Right cardiac atrium (tissue), 5 donors: ENCODE measurements at regions of chr20 and their contacts with region 1.

Region 1: DNA sequence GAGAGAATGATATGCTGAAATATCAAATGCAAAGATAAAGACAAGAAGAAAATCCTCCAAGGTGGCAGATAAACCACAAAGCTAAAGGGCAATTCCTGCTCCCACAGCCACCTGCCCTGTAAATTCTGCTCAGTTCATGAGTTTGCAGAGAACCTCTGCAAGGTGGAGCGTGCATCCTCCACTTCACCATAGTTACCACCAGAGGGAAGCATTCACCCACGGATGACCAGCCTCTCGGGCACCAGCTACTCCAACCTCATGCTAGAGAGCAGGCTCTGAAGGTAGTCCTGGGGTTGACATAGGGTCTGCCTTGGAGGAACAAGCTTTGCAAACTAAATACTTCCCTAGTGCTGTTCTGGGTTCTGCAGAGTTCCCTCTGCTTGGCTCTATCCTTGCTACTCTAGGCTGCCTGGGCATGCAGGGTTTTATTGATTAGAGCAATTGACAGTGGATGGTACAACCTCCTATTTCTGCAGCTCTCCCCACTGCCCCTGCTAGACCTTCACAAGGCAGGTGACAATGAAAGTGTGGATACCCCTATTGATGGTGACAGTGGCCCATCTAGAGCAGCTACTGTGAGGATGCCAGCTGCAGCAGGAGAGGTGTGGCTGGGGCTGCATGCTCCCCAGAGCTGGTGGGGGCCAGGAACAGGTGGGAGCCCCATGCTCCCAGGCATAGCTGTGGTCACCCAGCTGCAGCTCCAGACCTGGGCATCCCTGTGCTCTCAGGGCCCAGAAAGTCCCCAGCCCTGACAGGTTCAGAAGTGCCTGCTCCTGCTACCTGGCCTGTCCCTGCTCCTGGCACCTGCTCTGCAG is 51.1 kb downstream of the GGTLC1 start:
- DNase-seq: peak; percentile 38 to 73 (median 67)
- ATAC-seq: peak; percentile 93 to 96
- H3K4me3 ChIP-seq: no peak overlapping the region
- H3K27ac ChIP-seq: no peak overlapping the region
- H3K4me1 ChIP-seq: no peaks in the 10 kb centered on the region
- H3K27me3 ChIP-seq: no peaks in the 10 kb centered on the region

Region 2: GRCh38 chr20:22861229-22861980 is 1076.1 kb before region 1 on chr20:
- intact Hi-C with region 1: no loop called
- DNase-seq: no peak
- ATAC-seq: no peak
- H3K4me3 ChIP-seq: no peak overlapping the region
- H3K27ac ChIP-seq: peak overlapping the region; percentile 20
- H3K4me1 ChIP-seq: no peaks in the 10 kb centered on the region
- H3K27me3 ChIP-seq: no peaks in the 10 kb centered on the region

Region 3: DNA sequence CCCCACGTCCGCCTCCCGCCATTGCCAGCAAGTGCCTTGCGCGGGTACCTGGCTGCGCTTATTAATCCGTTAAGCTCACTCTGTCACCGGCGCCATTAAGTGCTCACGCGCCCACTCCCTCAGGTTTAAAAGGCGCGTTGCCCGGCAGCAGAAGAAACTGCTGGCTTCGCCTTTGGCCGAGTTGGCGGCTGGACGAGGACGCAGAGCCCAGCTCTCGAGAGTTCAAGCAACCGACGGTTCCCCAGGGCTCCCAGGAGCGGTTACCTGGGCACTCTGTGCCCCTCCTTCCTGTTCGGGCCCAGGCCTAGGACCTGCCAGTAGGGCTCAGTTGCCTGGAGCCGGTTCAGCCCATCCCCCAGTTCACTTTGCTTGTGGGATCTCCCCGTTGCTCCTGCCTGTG is 51.1 kb after region 1 on chr20 and contains the start of gene GGTLC1:
- intact Hi-C with region 1: loop called in 2 of 4 experiments (anchors 5 to 10 kb)
- DNase-seq: no peak
- ATAC-seq: no peak
- H3K4me3 ChIP-seq: no peak within 1 kb of the TSS
- H3K27ac ChIP-seq: no peak within 1 kb of the TSS
- H3K4me1 ChIP-seq: no peaks in the 10 kb centered on the region
- H3K27me3 ChIP-seq: no peaks in the 10 kb centered on the region
- total RNA-seq, gene GGTLC1: not detected

Region 4: GRCh38 chr20:23995905-23996666 is 58.6 kb after region 1 on chr20:
- intact Hi-C with region 1: loop called in 3 of 4 experiments (anchors 5 to 10 kb)
- DNase-seq: peak in 2 of 3 donors; percentile 54 to 76
- ATAC-seq: no peak
- H3K4me3 ChIP-seq: no peak overlapping the region
- H3K27ac ChIP-seq: no peak overlapping the region
- H3K4me1 ChIP-seq: no peaks in the 10 kb centered on the region
- H3K27me3 ChIP-seq: no peaks in the 10 kb centered on the region

Region 5: DNA sequence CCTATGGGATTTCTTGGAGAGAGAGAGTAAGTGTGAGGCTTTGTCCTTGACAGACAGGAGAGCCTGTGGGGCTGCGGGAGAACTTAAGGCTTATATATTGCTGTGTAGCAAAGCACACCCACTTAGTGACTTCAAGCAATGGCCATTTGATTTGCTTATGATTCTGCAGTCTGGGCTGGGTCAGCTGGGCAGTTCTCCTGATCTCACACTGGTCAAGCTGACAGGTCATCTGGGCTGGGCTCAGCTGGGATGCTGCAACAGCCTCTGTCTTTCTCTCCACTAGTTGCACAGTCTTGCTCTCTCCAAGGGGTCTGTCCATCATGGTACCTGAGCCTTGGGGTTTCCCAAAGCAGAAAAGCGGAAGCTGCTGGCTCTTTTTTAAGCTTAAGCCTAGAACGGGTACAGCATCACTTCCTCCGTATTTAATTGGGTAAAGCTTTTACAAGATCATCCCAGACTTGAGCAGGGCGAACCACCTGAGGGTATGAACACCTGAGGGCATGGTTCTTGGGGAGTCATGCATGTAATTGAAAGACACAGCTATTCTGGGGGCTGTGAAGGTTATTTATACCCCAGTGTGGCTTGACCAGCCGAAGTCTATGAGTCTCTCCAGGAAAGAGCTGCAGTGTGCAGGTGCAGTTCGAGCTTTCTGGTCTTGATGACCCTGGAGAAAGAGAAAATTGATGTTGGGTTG is 64.3 kb after region 1 on chr20:
- intact Hi-C with region 1: loop called in 3 of 4 experiments (anchors 5 to 10 kb)
- DNase-seq: no peak
- ATAC-seq: no peak
- H3K4me3 ChIP-seq: no peak overlapping the region
- H3K27ac ChIP-seq: no peak overlapping the region
- H3K4me1 ChIP-seq: no peaks in the 10 kb centered on the region
- H3K27me3 ChIP-seq: no peaks in the 10 kb centered on the region